Ascending aorta (tissue), 2 donors: ENCODE measurements at regions of chr1 and their contacts with region 1.

Region 1: DNA sequence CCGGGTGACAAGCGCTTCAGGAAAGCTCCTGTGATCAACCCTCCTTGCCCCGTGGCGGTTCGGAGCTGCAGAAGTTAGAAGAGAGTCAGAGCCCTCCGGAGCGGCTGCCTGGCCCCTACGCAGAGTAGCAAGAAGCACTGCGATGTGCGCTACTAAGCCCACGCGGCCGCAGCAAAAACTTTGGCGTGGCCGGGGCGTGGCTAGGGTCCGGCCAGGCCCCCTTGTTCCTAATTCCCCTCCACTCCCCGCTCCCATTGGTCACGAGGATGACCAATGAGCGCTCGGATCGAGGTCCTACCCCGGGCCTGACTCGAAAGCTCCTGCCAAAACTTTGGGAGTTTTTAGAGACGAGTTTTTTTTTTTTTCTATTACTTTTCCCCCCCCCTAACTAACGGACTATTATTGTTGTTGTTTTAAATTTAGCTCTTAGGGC is at the start of gene HLX:
- DNase-seq: peak; percentile 64 to 94
- H3K4me3 ChIP-seq: peak within 1 kb of the TSS; percentile 83 to 98
- H3K27ac ChIP-seq: peak within 1 kb of the TSS; percentile 93 to 94
- H3K4me1 ChIP-seq: peaks cover 0 to 7% of the 10 kb centered on the region in 2 donors
- H3K27me3 ChIP-seq: no peaks in the 10 kb centered on the region
- CTCF ChIP-seq: no peak
- total RNA-seq, gene HLX: 39.3 TPM

Region 2: GRCh38 chr1:220690140-220691025 is 188.7 kb before region 1 on chr1 and contains the start of gene C1orf115:
- intact Hi-C with region 1: loop called (anchors 5 kb)
- DNase-seq: peak; percentile 37 to 86
- H3K4me3 ChIP-seq: peak within 1 kb of the TSS; percentile 75 to 77
- H3K27ac ChIP-seq: no peak within 1 kb of the TSS
- H3K4me1 ChIP-seq: no peaks in the 10 kb centered on the region
- H3K27me3 ChIP-seq: no peaks in the 10 kb centered on the region
- CTCF ChIP-seq: peak; percentile 89 to 99 (median 96)
- total RNA-seq, gene C1orf115: 18.4 TPM

Region 3: GRCh38 chr1:220748089-220748934 is 130.8 kb before region 1 on chr1 and contains the start of gene MTARC2:
- intact Hi-C with region 1: loop called (anchors 10 kb)
- DNase-seq: peak; percentile 44 to 91
- H3K4me3 ChIP-seq: peak within 1 kb of the TSS; percentile 94 to 95
- H3K27ac ChIP-seq: peak within 1 kb of the TSS; percentile 87 to 89
- H3K4me1 ChIP-seq: peaks cover 0 to 28% of the 10 kb centered on the region in 2 donors
- H3K27me3 ChIP-seq: no peaks in the 10 kb centered on the region
- CTCF ChIP-seq: no peak
- total RNA-seq, gene MTARC2: 23.7 TPM

Region 4: DNA sequence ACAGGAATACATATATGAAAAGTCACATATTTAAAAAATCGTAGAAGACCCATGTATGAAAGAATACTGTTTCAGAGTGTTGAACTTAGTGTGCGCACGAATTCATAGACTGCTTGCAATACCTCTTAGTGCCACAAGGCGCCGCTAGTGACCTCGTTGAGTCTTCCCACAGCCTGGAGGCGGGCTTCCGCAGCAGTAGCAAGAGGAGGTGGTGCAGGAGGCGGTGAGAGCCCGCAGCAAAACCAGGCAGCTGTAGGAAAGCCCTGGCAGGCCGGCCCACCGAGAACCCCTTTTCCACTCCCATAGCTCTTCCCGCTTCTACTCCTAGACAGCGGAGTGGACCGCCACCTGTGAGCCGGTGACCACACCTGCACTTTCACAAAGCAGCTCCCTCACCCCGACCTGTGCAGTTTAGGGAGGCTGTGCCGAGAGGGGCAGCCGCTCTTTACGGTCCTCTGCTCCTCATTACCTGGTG is 68.9 kb before region 1 on chr1:
- intact Hi-C with region 1: loop called (anchors 5 kb)
- DNase-seq: peak in 1 of 2 donors; percentile 89
- H3K4me3 ChIP-seq: peak overlapping the region; percentile 8 to 36
- H3K27ac ChIP-seq: no peak overlapping the region
- H3K4me1 ChIP-seq: peaks cover 0 to 6% of the 10 kb centered on the region in 2 donors
- H3K27me3 ChIP-seq: no peaks in the 10 kb centered on the region
- CTCF ChIP-seq: peak; percentile 85 to 92 (median 90)

Region 5: GRCh38 chr1:222455188-222455879 is 1576.2 kb after region 1 on chr1:
- intact Hi-C with region 1: loop called (anchors 5 kb)
- DNase-seq: peak in 1 of 2 donors; percentile 88
- H3K4me3 ChIP-seq: peak overlapping the region; percentile 12 to 41
- H3K27ac ChIP-seq: peak overlapping the region in 1 of 2 donors; percentile 36
- H3K4me1 ChIP-seq: no peaks in the 10 kb centered on the region
- H3K27me3 ChIP-seq: no peaks in the 10 kb centered on the region
- CTCF ChIP-seq: peak; percentile 66 to 97 (median 88)